ENCODE measurements at regions of chr20 and their contacts with region 1.

Region 1: DNA sequence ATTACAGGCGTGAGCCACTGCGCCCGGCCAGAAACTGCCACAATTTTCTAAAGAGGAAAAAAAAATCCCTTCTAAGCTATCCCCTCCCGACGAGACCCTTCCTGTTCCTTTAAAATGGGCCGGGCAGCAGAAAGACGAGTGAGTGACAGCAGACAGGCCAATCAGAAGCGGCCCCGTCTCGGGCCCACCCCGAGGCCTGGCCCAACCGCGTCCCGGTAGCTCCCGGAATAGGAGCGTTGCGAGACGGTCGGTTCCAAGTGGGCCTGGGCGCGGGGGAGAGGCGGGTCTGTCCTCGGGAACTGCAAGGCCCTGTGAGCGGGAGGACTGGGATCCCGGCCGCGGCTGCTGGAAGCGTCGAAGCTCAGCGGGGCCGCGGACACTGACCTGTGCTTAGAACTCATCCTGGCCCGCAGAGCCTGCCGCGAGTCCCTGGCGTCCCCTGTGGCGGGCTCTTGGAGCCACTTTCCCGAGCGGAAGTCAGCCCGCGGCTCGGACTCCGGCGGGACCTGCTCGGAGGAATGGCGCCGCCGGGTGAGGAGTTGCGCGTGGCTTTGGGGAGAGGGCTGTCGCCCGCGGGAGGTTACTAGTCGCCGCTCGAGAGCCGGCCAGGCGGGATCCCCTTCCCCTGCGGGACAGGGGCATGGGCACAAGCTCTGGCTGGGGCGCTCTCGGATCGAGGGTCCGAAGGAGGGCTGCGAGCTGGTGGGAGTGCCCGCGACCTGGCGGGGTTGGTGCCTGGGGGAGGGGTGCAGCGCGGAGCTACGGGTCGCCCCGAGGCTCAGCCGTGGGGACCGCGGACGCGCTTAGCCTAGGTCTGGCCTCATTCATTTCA is at the starts of genes MROH8 and RPN2:
- DNase-seq: peak; percentile 89 to 97 (median 93)
- ATAC-seq: peak; percentile 95
- H3K4me3 Mint-ChIP-seq: peak within 1 kb of the TSS; percentile 95 to 100 (median 98)
- H3K27ac Mint-ChIP-seq: peak within 1 kb of the TSS; percentile 91 to 99 (median 98)
- H3K4me1 Mint-ChIP-seq: peaks cover 24 to 46% (median 45%) of the 10 kb centered on the region in 4 donors
- H3K27me3 Mint-ChIP-seq: peaks cover 0 to 2% (median 0%) of the 10 kb centered on the region in 5 donors
- polyA plus RNA-seq, gene MROH8: 0.49 to 2.5 (median 0.66) TPM
- polyA plus RNA-seq, gene RPN2: 235 to 239 (median 236) TPM

Region 2: DNA sequence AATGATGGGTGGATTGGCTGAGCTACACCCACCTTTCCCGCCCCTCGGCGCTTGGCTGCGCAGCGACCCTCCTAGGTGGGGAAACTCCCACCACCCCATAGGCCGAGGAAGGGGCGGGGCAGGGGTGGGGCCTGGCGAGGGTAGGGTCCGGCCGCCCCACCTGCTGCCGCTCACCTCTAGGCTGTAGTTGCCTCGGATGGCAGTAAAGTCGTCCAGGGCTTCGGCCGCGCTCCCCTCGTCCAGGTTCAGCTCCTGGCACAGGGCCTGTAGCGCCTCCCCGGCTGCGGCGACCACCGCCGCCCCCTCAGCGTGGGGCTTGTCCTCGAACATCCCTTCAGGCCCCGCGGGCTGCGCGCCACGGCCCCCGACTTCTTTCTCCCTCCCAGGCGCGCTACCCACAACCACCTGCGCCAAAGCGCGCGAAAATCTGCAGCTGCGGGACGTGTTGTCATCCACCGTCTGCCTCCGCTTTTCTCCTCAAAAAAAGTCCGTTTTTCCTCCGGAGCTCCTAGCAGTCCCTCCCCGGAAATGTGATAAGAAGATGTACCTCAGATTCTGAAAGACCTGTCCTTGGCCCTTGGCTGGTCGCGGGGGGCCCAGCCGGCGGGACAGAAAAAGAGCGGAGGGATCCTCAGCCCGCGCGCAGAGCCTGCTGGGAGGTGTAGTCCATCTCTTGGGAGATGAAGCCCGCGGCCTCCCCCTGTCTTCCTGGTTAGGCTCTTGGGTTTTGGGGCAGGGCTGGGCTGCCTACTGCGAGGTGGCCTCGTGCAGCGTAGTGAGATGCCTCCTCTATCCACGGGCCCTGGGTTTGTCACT is 83.2 kb before region 1 on chr20 and contains the start of gene RBL1:
- POLR2A ChIA-PET with region 1: interaction called, 24 read pairs
- DNase-seq: peak; percentile 76 to 94 (median 85)
- ATAC-seq: peak; percentile 85 to 89
- H3K4me3 Mint-ChIP-seq: peak within 1 kb of the TSS; percentile 98 to 100 (median 99)
- H3K27ac Mint-ChIP-seq: peak within 1 kb of the TSS; percentile 98 to 100 (median 99)
- H3K4me1 Mint-ChIP-seq: peaks cover 15 to 35% (median 25%) of the 10 kb centered on the region in 4 donors
- H3K27me3 Mint-ChIP-seq: peaks cover 0 to 2% (median 0%) of the 10 kb centered on the region in 5 donors
- polyA plus RNA-seq, gene RBL1: 6.2 to 7.6 (median 7.0) TPM

Region 3: GRCh38 chr20:37145005-37145404 is 34.0 kb before region 1 on chr20:
- POLR2A ChIA-PET with region 1: no interaction called
- DNase-seq: no peak
- ATAC-seq: no peak
- H3K4me3 Mint-ChIP-seq: no peak overlapping the region
- H3K27ac Mint-ChIP-seq: no peak overlapping the region
- H3K4me1 Mint-ChIP-seq: no peaks in the 10 kb centered on the region
- H3K27me3 Mint-ChIP-seq: no peaks in the 10 kb centered on the region

Region 4: GRCh38 chr20:37189416-37190016 is 10.5 kb after region 1 on chr20:
- POLR2A ChIA-PET with region 1: interaction called, 17 read pairs
- DNase-seq: no peak
- ATAC-seq: peak in 1 of 2 donors; percentile 44
- H3K4me3 Mint-ChIP-seq: peak overlapping the region; percentile 13 to 75 (median 48)
- H3K27ac Mint-ChIP-seq: peak overlapping the region; percentile 30 to 93 (median 80)
- H3K4me1 Mint-ChIP-seq: peaks cover 40 to 81% (median 70%) of the 10 kb centered on the region in 4 donors
- H3K27me3 Mint-ChIP-seq: no peaks in the 10 kb centered on the region

Region 5: GRCh38 chr20:37194621-37195417 is 15.8 kb after region 1 on chr20:
- POLR2A ChIA-PET with region 1: interaction called, 17 read pairs
- DNase-seq: peak in 2 of 10 donors; percentile 22 to 24
- ATAC-seq: peak; percentile 62 to 74
- H3K4me3 Mint-ChIP-seq: peak overlapping the region in 9 of 10 donors; percentile 40 to 82 (median 63)
- H3K27ac Mint-ChIP-seq: peak overlapping the region; percentile 64 to 92 (median 86)
- H3K4me1 Mint-ChIP-seq: peaks cover 45 to 73% (median 65%) of the 10 kb centered on the region in 4 donors
- H3K27me3 Mint-ChIP-seq: no peaks in the 10 kb centered on the region

Region 6: GRCh38 chr20:37527638-37528441 is 348.8 kb after region 1 on chr20 and contains the start of gene BLCAP:
- POLR2A ChIA-PET with region 1: interaction called, 11 read pairs
- DNase-seq: peak; percentile 87 to 99 (median 94)
- ATAC-seq: peak; percentile 92 to 93
- H3K4me3 Mint-ChIP-seq: peak within 1 kb of the TSS; percentile 84 to 94 (median 89)
- H3K27ac Mint-ChIP-seq: peak within 1 kb of the TSS; percentile 99 to 100 (median 100)
- H3K4me1 Mint-ChIP-seq: peaks cover 43 to 58% (median 52%) of the 10 kb centered on the region in 4 donors
- H3K27me3 Mint-ChIP-seq: no peaks in the 10 kb centered on the region
- polyA plus RNA-seq, gene BLCAP: 86.6 to 94.7 (median 91.8) TPM